ENCODE measurements at regions of chr12 and their contacts with region 1.

Region 1: DNA sequence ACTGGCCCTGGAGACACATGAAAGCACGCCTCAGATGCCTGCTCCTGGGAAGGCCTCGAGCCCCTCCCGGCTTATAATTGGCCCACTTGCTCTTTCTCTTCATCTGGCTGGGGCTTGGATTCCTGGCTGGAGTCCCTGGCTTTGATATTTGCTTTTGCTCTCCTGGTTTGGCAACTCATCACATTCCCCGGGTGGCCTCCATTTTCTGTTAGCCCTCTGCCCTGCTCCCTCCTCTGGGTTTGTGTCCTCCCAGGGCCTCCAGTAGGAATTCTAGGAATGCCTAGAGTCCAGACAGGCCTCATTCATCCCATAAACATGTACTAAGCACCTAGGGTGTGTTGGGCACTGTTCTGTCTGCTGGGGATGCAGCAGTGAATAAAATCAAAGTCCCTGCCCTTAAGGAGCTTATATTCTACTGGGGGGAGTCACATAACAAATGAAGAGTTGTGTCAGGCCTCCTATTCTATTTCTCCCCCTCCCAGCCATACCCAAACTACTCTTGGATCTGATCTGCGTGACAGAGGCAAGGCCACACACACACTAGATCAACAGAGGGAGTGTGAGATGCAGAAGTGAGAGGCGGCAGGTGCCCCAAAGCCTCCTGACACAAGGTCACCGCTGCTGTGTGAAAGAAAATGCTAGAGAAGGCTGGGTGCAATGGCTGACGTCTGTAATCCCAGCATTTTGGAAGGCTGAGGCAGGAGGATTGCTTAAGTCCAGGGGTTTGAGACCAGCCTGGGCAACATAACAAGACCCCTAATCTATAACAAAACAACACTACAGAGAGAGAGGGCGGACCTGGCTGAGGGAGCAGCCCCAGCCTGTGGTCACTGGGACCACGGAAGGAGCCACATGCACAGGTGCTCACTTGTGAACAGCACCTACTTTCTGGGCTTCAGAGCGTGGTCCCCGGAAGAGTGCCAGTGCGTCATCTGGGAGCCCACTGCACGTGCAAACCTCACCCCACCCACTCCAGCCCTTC is 21.2 kb upstream of the TSPAN9 start:
- DNase-seq: no peak
- ATAC-seq: no peak
- H3K4me3 Mint-ChIP-seq: no peak overlapping the region
- H3K27ac Mint-ChIP-seq: no peak overlapping the region
- H3K4me1 Mint-ChIP-seq: peaks cover 4% of the 10 kb centered on the region
- H3K27me3 Mint-ChIP-seq: peaks cover 32% of the 10 kb centered on the region

Region 2: GRCh38 chr12:2988494-2988893 is 67.5 kb before region 1 on chr12:
- CTCF ChIA-PET with region 1: no interaction called
- DNase-seq: no peak
- ATAC-seq: no peak
- H3K4me3 Mint-ChIP-seq: no peak overlapping the region
- H3K27ac Mint-ChIP-seq: no peak overlapping the region
- H3K4me1 Mint-ChIP-seq: no peaks in the 10 kb centered on the region
- H3K27me3 Mint-ChIP-seq: no peaks in the 10 kb centered on the region

Region 3: GRCh38 chr12:3073438-3074250 is 17.6 kb after region 1 on chr12:
- CTCF ChIA-PET with region 1: interaction called, 16 read pairs
- DNase-seq: peak; percentile 87
- ATAC-seq: peak; percentile 48
- H3K4me3 Mint-ChIP-seq: no peak overlapping the region
- H3K27ac Mint-ChIP-seq: peak overlapping the region; percentile 36
- H3K4me1 Mint-ChIP-seq: peaks cover 11% of the 10 kb centered on the region
- H3K27me3 Mint-ChIP-seq: peaks cover 28% of the 10 kb centered on the region